A549 (cell line): ENCODE measurements at regions of chr7 and their contacts with region 1.

Region 1: DNA sequence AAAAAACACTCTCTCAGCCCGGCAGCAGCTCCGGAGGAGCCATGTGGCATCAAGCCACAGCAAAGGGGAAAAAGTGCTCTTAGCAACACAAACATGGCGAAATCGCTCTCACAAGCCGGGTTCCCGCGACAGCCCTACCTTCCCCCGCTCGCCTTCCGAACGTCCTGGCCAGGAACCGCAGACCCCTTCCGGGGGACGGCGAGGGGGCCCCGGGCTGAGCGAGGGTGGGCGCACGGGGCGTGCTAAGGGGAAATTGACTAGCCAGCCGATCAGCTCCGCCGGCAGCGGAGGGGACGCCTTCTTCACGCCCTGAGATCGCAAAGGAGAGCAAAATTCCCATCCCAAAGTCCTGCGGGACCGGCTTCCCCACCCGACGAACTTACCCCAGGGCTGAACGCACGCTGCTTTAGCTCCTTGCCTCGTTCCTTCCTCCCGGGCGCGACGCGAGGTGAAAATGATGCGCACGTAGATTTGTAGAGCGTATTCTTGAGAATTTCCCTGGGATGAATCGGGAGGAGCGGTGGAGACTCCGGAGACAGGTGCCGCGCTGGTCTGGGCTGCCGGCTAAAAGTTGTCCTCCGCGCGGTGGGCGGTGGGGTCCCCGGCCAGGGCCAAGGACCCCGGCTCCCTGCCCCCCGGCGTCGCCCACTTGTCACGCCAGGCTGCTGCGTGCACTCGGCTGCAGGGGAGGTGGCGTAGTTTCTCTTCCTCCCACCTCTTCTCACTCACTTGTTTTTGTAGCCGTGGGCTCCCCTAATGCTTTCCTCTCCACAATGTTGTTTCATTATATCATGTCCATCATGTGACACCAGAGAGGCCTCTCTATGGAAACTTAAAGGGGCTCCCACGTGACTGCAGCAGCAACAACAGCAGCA is 220.1 kb upstream of the MKLN1 start:
- DNase-seq: peak; percentile 80 to 88
- ATAC-seq: peak; percentile 38 to 53; a peak in 5 of 6 replicates
- H3K4me3 ChIP-seq: peak overlapping the region; percentile 78
- H3K27ac ChIP-seq: peak overlapping the region; percentile 98 to 99
- H3K4me1 ChIP-seq: peaks cover 36% of the 10 kb centered on the region
- CTCF ChIP-seq: no peak
- EP300 ChIP-seq: no peak
- POLR2A ChIP-seq: no peak
- RAD21 ChIP-seq: peak in 1 of 2 experiments; percentile 20; a peak in 2 of 5 replicates

Region 2: GRCh38 chr7:131173148-131173890 is 65.7 kb after region 1 on chr7:
- CTCF ChIA-PET with region 1: interaction called, 3 read pairs
- POLR2A ChIA-PET with region 1: interaction called, 11 read pairs
- DNase-seq: peak; percentile 90 to 94
- ATAC-seq: peak; percentile 85 to 93
- H3K4me3 ChIP-seq: peak overlapping the region; percentile 25; the same call in 1 of the 3 replicates
- H3K27ac ChIP-seq: peak overlapping the region; percentile 84 to 85
- H3K4me1 ChIP-seq: peaks cover 52% of the 10 kb centered on the region
- CTCF ChIP-seq: no peak
- EP300 ChIP-seq: peak; percentile 60 to 70; a peak in 3 of 5 replicates
- POLR2A ChIP-seq: no peak
- RAD21 ChIP-seq: peak; percentile 19 to 21

Region 3: DNA sequence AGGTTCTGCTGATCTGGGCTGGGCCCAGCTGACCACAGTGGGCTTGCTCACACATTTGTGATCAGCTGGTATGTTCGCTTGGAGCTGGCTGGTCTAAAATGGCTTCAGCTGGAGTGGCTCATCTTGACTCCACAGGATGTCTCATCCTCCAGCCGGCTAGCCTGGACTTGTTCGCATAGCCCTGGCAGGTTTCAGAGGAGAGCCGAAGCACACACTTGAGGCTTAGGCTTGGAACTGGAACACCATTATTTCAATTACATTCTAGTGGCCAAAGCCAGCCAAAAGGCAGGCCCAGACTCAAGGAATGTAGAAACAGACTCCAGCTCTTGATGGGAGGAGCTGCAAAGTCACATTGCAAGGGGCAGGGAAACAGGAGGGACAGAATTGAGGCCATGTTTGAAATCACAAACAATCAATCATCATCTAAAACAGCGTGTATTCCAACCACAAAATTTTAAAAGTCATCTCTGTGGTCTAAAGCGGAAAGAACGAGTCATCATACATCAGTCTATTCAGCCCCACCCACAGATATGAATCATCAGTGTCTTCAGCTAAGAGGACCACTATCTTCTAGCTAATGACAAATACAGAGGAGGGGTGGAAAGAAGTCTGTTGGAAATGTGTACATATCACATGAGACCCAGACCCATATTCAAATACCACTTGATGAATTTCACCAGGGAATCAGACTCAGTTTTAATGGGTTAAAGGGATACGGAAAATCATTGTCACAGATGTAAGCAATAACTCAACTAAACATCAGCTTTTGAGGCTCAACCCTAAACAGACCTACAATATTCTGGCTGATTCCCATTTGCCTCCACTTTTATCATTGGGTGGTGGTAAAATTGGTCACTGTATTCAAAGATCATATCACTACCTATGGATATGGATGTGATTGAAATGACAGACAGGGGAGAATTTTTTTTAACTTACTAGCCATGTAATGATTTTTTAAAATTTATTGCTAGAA is 81.1 kb after region 1 on chr7:
- CTCF ChIA-PET with region 1: interaction called, 5 read pairs
- POLR2A ChIA-PET with region 1: interaction called, 26 read pairs
- DNase-seq: peak; percentile 79 to 90
- ATAC-seq: peak; percentile 74 to 79
- H3K4me3 ChIP-seq: no peak overlapping the region
- H3K27ac ChIP-seq: peak overlapping the region; percentile 72 to 90
- H3K4me1 ChIP-seq: peaks cover 75% of the 10 kb centered on the region
- CTCF ChIP-seq: no peak
- EP300 ChIP-seq: peak in 1 of 2 experiments; percentile 54; a peak in 2 of 5 replicates
- POLR2A ChIP-seq: no peak
- RAD21 ChIP-seq: no peak